ENCODE measurements at regions of chr14 and their contacts with region 1.

Region 1: DNA sequence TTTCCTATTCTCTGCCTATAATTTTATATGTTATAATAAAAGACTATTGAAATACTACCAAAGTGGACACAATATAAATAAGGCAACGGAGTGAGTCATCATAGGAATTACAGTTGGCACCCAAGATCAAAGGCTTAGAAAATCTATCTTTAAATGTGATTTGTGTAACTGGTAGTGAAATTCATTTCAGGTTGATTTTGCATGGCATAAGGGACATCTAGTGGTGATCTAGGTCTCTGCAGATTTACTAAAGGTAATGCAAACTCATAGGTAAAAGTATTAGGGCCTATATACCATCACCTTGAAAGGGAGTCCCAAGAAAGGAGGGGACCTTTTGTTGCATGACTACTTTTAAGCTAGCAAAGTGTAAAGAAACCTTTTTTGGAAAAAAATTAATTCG is 527.2 kb downstream of the NRXN3 start:
- DNase-seq: no peak
- H3K4me3 ChIP-seq: no peak overlapping the region
- H3K27me3 ChIP-seq: no peaks in the 10 kb centered on the region; the same call in 1 of the 2 replicates
- CTCF ChIP-seq: peak; percentile 69

Region 2: DNA sequence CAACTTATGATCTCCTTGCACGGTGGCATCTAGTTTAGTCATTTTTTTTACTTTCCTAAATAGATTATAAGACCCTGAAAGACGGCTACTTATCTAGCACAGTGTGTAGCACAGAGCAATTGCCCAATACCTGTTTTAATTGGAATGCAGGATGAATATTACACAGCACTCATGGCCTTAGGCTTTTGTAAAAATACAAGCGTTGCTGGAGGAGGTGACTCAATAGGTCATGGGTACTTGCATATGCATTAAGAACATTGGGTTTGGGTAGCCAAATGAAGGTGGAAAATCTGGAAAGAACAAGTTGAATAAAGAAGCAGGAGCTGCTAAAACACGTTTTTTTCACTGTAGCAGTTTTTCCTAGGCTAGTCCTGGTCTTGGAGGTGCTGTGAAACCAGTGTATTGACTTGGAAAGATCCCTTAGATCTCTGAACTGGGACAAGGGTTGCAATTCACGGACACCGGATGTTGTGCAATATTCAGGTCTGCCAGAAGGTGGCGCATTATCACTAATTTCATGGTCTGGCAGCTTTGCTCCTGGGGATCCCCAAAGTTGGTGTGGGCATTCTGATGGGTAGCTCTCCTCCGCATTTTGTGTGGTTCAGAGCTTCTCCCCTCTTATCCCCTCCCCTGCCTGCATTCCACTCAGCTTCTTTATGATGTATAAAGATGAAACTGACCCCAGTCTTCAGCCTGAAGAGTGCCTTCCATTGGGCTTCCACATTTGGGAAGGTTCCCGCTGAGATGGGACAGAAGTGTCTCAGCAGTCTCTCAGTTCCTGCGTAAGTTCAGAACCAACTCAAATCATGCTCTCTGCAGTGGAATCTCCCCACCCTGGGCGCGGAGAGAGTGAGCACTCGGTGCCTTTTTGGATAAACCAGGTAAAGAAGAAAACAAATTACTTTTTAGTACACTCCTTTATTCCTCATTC is 248.9 kb before region 1 on chr14:
- CTCF ChIA-PET with region 1: interaction called, 13 read pairs
- POLR2A ChIA-PET with region 1: no interaction called
- DNase-seq: no peak
- H3K4me3 ChIP-seq: no peak overlapping the region
- H3K27me3 ChIP-seq: no peaks in the 10 kb centered on the region
- CTCF ChIP-seq: peak; percentile 46

Measured in BJ (cell line).